GM12878 (cell line): ENCODE measurements at regions of chr6 and their contacts with region 1.

Region 1: GRCh38 chr6:53214172-53214571 is 65.5 kb upstream of the GCM1 start:
- DNase-seq: no peak
- ATAC-seq: no peak
- H3K4me3 ChIP-seq: no peak overlapping the region
- H3K27ac ChIP-seq: no peak overlapping the region
- H3K4me1 ChIP-seq: peaks cover 3% of the 10 kb centered on the region
- H3K27me3 ChIP-seq: no peaks in the 10 kb centered on the region
- CTCF ChIP-seq: no peak
- EP300 ChIP-seq: no peak
- POLR2A ChIP-seq: no peak
- RAD21 ChIP-seq: no peak

Region 2: GRCh38 chr6:53203483-53203882 is 10.7 kb before region 1 on chr6:
- CTCF ChIA-PET with region 1: interaction called, 3 read pairs
- POLR2A ChIA-PET with region 1: no interaction called
- RAD21 ChIA-PET with region 1: no interaction called
- SMC1A ChIA-PET with region 1: interaction called, 10 read pairs
- in situ Hi-C with region 1: no loop called
- intact Hi-C with region 1: no loop called
- DNase-seq: no peak
- ATAC-seq: no peak
- H3K4me3 ChIP-seq: no peak overlapping the region
- H3K27ac ChIP-seq: no peak overlapping the region
- H3K4me1 ChIP-seq: peaks cover 12% of the 10 kb centered on the region
- H3K27me3 ChIP-seq: no peaks in the 10 kb centered on the region
- CTCF ChIP-seq: no peak
- EP300 ChIP-seq: no peak
- POLR2A ChIP-seq: no peak
- RAD21 ChIP-seq: no peak

Region 3: GRCh38 chr6:53258076-53258773 is 44.1 kb after region 1 on chr6:
- CTCF ChIA-PET with region 1: no interaction called
- POLR2A ChIA-PET with region 1: no interaction called
- RAD21 ChIA-PET with region 1: no interaction called
- SMC1A ChIA-PET with region 1: no interaction called
- in situ Hi-C with region 1: no loop called
- intact Hi-C with region 1: no loop called
- DNase-seq: no peak
- ATAC-seq: no peak
- H3K4me3 ChIP-seq: no peak overlapping the region
- H3K27ac ChIP-seq: no peak overlapping the region
- H3K4me1 ChIP-seq: no peaks in the 10 kb centered on the region
- H3K27me3 ChIP-seq: no peaks in the 10 kb centered on the region
- CTCF ChIP-seq: no peak
- EP300 ChIP-seq: no peak
- POLR2A ChIP-seq: no peak
- RAD21 ChIP-seq: no peak

Region 4: DNA sequence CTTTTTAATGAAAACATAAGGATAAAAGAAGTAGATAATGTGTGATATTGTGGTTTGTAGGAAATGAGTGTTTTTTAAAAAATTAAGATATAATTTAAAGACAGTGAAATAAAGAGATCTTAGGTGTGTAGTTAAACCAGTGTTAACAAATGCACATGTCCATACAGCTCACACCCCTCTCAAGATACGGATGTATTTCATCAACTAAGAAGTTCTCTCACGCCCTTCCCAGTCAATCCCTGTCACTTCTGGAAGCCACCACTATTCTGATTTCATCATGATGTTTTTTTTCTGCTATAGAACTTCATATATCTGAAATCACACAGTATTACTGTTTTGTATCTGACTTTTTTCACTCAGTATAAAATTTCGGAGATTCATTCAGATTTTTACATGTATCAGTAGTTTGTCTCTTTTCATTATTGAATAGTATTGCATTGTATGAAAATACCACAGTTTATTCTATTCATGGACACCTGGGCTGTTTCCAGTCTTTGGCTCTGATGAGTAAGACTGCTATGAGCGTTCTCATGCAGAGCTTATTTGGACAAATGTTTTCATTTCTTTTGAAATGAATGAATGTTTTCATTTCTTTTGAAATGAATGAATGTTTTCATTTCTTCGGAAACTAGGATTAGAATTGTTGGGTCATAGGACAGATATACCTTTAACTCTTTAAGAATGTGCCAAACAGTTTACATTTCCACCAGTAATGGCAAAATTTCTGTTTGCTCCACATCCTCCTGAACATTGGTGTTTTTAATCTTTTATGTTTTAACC is 184.3 kb after region 1 on chr6:
- CTCF ChIA-PET with region 1: no interaction called
- POLR2A ChIA-PET with region 1: no interaction called
- RAD21 ChIA-PET with region 1: no interaction called
- SMC1A ChIA-PET with region 1: no interaction called
- in situ Hi-C with region 1: no loop called
- intact Hi-C with region 1: no loop called
- DNase-seq: no peak
- ATAC-seq: no peak
- H3K4me3 ChIP-seq: no peak overlapping the region
- H3K27ac ChIP-seq: no peak overlapping the region
- H3K4me1 ChIP-seq: no peaks in the 10 kb centered on the region
- H3K27me3 ChIP-seq: no peaks in the 10 kb centered on the region
- CTCF ChIP-seq: no peak
- EP300 ChIP-seq: no peak
- POLR2A ChIP-seq: no peak
- RAD21 ChIP-seq: no peak

Region 5: DNA sequence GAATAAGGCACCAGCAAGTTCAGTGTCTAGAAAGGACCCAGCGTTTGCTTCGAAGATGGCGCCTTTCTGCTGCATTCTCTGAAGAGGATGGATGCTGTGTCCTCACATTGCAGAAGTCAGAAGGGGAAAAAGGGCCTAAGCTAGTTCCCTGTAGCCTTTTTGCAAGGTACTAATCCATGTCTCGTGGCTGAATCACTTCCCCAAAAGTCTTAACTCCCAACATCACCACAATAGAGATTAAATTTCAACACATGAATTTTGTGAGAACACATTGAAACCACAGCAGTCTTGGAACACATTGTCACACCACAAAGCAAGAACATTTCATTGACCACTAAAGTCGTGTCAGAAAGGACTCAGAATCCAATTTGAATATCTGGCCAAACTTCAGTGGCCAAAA is 409.3 kb after region 1 on chr6:
- CTCF ChIA-PET with region 1: no interaction called
- POLR2A ChIA-PET with region 1: no interaction called
- RAD21 ChIA-PET with region 1: no interaction called
- SMC1A ChIA-PET with region 1: no interaction called
- in situ Hi-C with region 1: no loop called
- intact Hi-C with region 1: no loop called
- DNase-seq: no peak
- ATAC-seq: no peak
- H3K4me3 ChIP-seq: no peak overlapping the region
- H3K27ac ChIP-seq: no peak overlapping the region
- H3K4me1 ChIP-seq: no peaks in the 10 kb centered on the region
- H3K27me3 ChIP-seq: peaks cover 2% of the 10 kb centered on the region in 2 experiments; a peak in 2 of 4 replicates
- CTCF ChIP-seq: no peak
- EP300 ChIP-seq: no peak
- POLR2A ChIP-seq: no peak
- RAD21 ChIP-seq: no peak